Calu3 (cell line): ENCODE measurements at regions of chr1 and their contacts with region 1.

Region 1: DNA sequence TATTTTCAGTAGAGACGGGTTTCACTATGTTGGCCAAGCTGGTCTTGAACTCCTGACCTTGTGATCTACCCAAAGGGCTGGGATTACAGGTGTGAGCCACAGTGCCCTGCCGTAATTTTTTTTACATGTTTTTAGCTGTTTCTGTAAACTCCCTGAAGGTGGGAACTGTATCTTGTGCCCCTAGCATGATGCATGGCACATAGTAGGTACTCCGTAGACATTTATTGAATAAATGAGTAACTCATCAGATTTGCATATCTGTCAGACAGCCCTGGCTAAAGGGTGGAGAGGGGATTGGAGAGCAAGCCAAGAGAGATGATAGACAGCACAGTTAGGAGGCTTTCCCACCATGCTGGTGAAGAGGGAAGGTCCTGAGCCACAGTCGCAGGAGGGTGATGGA is 247.2 kb downstream of the NFIA start:
- DNase-seq: no peak
- H3K4me3 Mint-ChIP-seq: no peak overlapping the region
- H3K27ac Mint-ChIP-seq: no peak overlapping the region
- H3K4me1 Mint-ChIP-seq: no peaks in the 10 kb centered on the region
- H3K27me3 Mint-ChIP-seq: no peaks in the 10 kb centered on the region
- CTCF ChIP-seq: no peak

Region 2: GRCh38 chr1:61170328-61171238 is 159.0 kb before region 1 on chr1:
- CTCF ChIA-PET with region 1: interaction called, 11 read pairs
- intact Hi-C with region 1: no loop called
- DNase-seq: peak; percentile 16
- H3K4me3 Mint-ChIP-seq: no peak overlapping the region
- H3K27ac Mint-ChIP-seq: no peak overlapping the region
- H3K4me1 Mint-ChIP-seq: peaks cover 28% of the 10 kb centered on the region
- H3K27me3 Mint-ChIP-seq: no peaks in the 10 kb centered on the region
- CTCF ChIP-seq: no peak